ENCODE measurements at regions of chr3 and their contacts with region 1.

Region 1: DNA sequence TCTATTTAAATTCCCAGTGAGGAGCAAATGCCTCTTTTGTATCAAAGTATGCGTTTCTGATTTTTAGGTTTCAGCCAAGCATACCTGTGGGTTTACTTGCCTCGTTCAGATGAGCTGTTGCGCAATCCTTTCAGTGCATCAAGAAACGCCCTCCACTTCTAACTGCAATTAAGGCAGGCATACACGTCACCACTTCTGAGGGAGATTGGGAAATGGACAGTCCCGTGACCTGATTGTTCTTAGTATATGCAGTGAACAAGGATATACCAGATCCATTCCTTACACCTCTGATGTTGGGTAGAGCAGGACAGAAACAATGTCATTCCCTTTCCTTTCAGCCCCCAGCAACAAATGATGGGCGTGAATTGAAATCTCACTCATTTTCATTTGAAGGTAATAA is 219.0 kb downstream of the ITPR1 start:
- DNase-seq: peak; percentile 69 to 89 (median 87)
- H3K4me3 ChIP-seq: no peak overlapping the region
- H3K4me3 Mint-ChIP-seq: no peak overlapping the region
- H3K27ac ChIP-seq: peak overlapping the region in 1 of 2 donors; percentile 60
- H3K27ac Mint-ChIP-seq: peak overlapping the region; percentile 34 to 87 (median 60)
- H3K4me1 ChIP-seq: peaks cover 11 to 12% of the 10 kb centered on the region in 2 donors
- H3K4me1 Mint-ChIP-seq: peaks cover 13% of the 10 kb centered on the region
- H3K27me3 ChIP-seq: no peaks in the 10 kb centered on the region
- H3K27me3 Mint-ChIP-seq: no peaks in the 10 kb centered on the region
- CTCF ChIP-seq: no peak

Region 2: DNA sequence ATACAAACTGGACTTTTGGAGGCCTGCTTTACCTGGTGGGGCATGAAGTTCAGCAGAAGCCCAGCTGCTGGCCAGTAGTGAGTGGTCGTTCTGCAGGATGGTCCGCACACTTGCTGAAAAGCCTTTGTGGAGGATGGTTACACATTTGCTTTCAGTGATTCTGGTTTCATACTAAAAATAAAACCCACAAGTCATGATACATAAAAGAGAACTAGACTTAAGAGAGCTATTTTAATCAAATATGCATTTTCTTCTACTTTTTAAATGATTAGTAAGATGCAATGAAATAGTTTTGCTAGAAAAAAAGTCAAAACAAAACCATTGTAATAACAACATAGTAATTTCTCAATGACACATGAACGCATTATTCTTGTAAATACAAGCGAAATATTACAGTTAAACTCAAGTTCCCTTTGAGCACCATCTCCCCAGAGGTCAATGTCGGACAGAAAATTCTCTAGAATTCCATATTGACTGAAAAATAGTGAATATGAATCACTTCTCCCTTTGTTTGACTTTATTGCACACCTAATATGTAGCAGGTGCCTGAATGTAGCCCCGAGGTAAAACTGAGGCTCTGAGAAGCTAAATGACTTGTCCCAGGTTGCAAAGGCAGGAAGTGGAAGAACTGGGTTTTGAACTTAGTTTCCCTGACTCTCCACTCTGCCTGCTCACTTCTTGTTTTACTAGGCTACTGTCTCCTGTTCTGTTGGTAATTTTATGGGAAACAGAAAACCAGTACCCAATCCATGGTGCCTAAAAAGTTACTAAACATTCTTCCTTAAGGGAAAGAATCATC is 1610.3 kb before region 1 on chr3:
- intact Hi-C with region 1: no loop called
- DNase-seq: no peak
- H3K4me3 ChIP-seq: no peak overlapping the region
- H3K4me3 Mint-ChIP-seq: no peak overlapping the region
- H3K27ac ChIP-seq: no peak overlapping the region
- H3K27ac Mint-ChIP-seq: no peak overlapping the region
- H3K4me1 ChIP-seq: no peaks in the 10 kb centered on the region
- H3K4me1 Mint-ChIP-seq: no peaks in the 10 kb centered on the region
- H3K27me3 ChIP-seq: no peaks in the 10 kb centered on the region
- H3K27me3 Mint-ChIP-seq: peaks cover 0 to 6% (median 3%) of the 10 kb centered on the region in 3 donors
- CTCF ChIP-seq: no peak

Region 3: DNA sequence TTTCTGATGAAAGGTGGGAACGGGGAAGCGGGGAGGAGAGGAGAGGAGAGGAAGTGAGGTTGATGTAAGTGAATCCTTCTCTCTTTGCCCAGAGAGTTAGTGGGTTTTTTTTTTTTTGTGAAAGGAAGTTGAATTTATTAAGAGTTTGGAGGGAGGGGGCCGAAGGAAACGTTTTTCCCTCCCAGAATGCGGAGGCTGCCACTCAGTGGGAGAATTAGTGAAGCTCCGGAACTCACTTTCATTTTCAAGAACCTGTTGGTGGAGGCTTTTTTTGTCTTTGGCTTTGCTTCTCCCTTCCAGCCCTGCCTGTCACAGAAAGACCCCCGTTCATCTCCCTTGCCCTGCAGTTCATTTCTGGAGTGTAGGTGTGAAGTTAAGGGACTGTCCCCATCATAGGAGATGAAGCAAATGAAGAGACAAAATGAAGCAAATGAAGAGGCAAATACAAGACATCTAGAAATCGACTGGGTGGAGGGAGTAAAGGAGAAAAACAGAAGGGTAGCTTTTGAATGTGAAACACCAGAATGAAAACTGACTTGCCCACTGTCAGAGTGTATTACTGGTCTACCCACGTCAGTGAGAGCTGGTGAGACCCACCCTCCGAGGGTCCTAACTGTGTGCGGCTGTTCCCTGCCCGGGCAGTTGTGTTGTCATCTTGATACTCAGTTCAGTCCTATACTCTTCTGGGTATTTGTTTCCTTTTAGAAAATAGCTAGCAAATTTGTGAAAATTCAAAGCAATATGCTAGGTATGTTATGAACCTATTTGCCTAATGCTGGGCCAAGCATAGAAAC is 127.5 kb before region 1 on chr3:
- intact Hi-C with region 1: no loop called
- DNase-seq: peak; percentile 16 to 19 (median 18)
- H3K4me3 ChIP-seq: peak overlapping the region; percentile 6 to 79 (median 66)
- H3K4me3 Mint-ChIP-seq: peak overlapping the region; percentile 80 to 99
- H3K27ac ChIP-seq: peak overlapping the region; percentile 1 to 72
- H3K27ac Mint-ChIP-seq: peak overlapping the region; percentile 77 to 94 (median 89)
- H3K4me1 ChIP-seq: peaks cover 42 to 58% of the 10 kb centered on the region in 2 donors
- H3K4me1 Mint-ChIP-seq: peaks cover 80% of the 10 kb centered on the region
- H3K27me3 ChIP-seq: no peaks in the 10 kb centered on the region
- H3K27me3 Mint-ChIP-seq: no peaks in the 10 kb centered on the region
- CTCF ChIP-seq: no peak

Region 4: DNA sequence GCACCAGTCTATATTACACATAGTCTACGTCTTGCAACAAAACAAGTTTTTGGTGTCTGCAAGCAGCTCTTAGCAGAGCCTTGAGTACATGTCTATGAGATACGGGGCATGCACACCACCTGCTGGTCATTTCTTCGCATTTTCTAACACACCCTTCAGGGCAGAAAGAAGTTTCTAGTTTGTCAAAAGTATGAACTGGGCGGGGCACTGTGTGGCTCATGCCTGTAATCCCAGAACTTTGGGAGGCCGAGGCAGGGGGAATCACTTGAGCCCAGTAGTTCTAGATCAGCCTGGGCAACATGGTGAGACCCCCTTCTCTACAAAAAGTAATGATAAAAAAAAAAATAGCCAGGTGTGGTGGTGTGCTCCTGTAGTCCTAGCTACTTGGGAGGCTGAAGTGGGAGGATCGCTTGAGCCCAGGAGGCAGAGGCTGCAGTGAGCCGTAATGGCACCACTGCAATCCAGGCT is 345.7 kb after region 1 on chr3:
- intact Hi-C with region 1: loop called (anchors 2 kb)
- DNase-seq: peak; percentile 71 to 81 (median 78)
- H3K4me3 ChIP-seq: no peak overlapping the region
- H3K4me3 Mint-ChIP-seq: no peak overlapping the region
- H3K27ac ChIP-seq: no peak overlapping the region
- H3K27ac Mint-ChIP-seq: peak overlapping the region in 2 of 7 donors; percentile 12 to 70
- H3K4me1 ChIP-seq: peaks cover 48 to 53% of the 10 kb centered on the region in 2 donors
- H3K4me1 Mint-ChIP-seq: peaks cover 54% of the 10 kb centered on the region
- H3K27me3 ChIP-seq: no peaks in the 10 kb centered on the region
- H3K27me3 Mint-ChIP-seq: peaks cover 2 to 5% (median 4%) of the 10 kb centered on the region in 3 donors
- CTCF ChIP-seq: peak; percentile 84